Posterior cingulate gyrus (tissue), 11 donors: ENCODE measurements at regions of chr4 and their contacts with region 1.

Region 1: GRCh38 chr4:5998333-5998936 is 19.8 kb downstream of the C4orf50 start:
- DNase-seq: peak; percentile 60 to 96 (median 75)

Region 2: GRCh38 chr4:6087673-6088341 is 89.4 kb after region 1 on chr4:
- intact Hi-C with region 1: loop called (anchors 5 kb)
- DNase-seq: peak in 8 of 10 donors; percentile 38 to 95 (median 71)

Region 3: DNA sequence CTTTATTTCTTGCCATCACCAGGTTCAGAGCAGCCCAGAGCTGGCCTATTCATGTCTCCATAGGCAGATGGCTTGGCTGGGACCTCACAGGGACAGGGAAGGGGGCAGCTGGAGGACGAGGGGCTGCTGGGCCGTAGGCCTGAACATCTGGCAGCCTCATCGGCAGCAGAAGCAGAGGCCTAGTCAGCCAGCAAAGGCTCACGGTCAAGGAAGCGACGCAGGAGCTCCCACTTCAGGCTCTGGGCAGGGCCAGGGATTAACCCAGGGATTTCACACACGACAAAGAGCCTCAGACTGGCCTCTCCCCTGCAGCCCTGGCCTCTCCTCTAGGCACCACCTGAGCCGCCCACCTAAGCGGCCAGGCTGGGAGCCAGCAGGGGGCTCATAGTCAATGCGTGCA is 530.6 kb after region 1 on chr4:
- intact Hi-C with region 1: no loop called
- DNase-seq: peak in 1 of 10 donors; percentile 60